ENCODE measurements at regions of chr7 and their contacts with region 1.

Region 1: DNA sequence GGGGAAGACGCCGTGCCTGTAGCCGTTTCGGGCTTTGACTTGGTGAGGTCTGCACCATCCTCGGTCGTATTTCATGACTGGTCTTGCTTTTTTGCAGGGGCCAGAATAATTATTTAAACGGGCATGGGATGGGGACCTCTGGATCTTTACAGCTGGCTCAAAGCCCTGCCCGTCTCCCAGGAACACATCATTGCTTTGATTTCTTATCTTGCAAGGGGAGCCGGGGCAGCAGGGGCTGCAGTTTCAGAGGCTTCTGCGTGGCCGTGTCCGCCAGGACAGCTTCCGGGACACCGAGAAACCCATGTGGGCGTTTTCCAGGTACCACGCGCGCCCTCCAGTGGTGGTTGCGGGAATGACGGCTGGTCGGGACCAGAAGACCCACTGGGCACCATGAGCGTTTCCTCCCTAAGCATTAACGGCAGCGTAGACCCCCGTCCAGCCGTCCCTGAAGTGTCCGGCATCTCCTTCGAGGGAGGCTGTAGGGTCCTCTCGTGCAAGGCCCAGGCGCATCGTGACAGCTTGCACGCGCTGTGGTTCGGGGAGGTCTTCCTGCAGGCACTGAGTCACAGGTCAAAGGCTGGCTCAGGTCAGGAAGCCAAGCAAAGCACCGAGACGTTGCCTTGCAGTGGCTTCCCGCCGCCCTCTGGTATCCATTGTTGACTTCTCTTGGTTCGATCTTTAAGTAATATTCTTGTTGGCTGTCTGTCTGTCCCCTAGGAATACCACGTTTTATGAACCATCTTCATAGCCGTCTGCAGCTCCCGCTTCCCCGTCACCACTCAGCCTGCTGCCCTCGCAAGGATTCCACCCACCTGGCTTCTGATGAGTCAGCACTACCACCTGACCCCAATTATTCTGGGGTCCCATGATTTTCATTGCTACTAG is 16.2 kb upstream of the ZFAND2A start:
- DNase-seq: peak; percentile 87
- ATAC-seq: peak; percentile 73
- H3K4me3 Mint-ChIP-seq: peak overlapping the region; percentile 22
- H3K27ac Mint-ChIP-seq: peak overlapping the region; percentile 86
- H3K4me1 Mint-ChIP-seq: peaks cover 20% of the 10 kb centered on the region
- H3K27me3 Mint-ChIP-seq: peaks cover 11% of the 10 kb centered on the region

Region 2: DNA sequence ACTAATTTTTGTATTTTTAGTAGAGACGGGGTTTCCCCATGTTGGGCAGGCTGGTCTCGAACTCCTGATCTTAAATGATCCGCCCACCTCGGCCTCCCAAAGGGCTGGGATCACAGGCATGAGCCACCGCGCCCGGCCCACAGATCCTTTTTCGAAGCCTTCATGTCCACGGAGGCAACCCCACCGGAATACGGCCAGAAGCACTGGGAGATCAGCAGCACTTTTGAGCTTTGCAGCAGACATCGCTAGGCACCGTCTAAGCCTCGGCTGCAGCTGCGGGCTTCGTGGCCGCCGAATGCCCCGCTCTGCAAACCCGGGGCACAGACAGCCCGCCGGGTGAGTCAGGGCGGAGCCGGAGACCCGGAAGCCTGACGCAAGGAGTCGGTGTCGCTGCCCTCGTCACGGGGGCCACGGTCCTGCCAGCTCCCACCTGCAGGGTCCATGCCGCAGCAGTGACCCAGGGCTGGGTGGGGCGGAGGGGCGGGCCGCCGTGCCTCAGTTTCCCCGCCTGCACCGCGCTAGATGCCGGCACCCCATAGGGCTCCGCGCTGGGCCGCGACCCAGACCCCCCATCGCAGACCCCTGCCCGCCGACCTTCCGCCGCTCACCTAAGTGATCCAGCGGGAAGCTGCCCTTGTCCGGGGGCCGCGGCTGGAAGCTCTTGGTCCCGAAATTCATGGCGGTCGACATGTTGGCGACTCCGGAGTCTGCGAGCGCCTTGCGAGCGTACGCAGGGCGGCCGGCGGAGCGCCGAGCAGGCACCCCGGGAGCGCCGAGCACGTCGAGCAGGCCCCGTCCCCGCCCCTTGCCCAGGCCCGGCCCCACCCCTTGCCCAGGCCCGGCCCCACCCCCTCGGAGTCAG is 201.2 kb before region 1 on chr7 and contains the start of gene COX19:
- CTCF ChIA-PET with region 1: interaction called, 11 read pairs
- POLR2A ChIA-PET with region 1: interaction called, 4 read pairs
- DNase-seq: peak; percentile 92
- ATAC-seq: peak; percentile 91
- H3K4me3 Mint-ChIP-seq: peak within 1 kb of the TSS; percentile 93
- H3K27ac Mint-ChIP-seq: peak within 1 kb of the TSS; percentile 92
- H3K4me1 Mint-ChIP-seq: peaks cover 28% of the 10 kb centered on the region
- H3K27me3 Mint-ChIP-seq: no peaks in the 10 kb centered on the region
- total RNA-seq, gene COX19: 16.8 to 18.2 TPM

Region 3: DNA sequence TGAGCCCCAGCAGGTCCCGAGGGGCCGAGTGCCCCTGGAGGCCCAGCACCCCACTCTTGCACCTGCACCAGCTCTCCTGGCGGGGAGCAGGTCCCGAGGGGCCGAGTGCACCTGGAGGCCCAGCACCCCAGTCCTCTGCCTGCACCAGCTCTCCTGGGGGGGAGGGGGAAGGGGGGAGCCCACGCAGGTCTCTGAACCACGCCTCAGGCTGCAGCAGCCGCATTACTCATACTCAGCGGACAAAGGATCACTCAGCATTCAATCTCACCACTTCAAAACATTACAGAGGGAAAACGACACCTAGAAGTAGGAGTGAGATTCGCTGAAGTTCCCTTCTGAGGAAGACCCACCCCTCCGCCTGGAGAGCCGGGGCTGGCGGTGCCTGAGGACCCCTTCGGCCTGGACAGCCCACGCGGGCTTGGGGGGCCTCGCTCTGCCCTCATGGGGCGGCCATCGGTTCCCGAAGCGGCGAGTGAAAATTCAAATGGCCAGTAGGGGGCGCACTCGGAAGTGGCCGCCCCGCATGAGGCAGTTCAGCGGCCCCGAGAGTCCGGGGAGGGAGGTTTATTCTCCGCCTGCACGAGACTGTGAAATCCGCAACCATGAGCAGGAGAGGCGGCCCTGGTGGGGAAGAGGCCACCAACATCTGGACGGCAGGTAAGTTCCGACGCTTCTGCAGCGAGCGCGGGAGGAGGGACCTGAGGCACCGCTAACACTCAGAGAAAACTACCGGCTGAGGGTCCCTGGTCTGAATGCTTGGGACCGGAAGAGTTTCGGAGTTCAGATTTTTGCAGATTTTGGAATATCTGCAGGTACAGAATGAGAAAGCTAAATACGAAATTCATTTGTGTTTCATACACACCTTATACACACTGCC is 89.4 kb before region 1 on chr7:
- CTCF ChIA-PET with region 1: interaction called, 20 read pairs
- POLR2A ChIA-PET with region 1: no interaction called
- DNase-seq: peak; percentile 82
- ATAC-seq: peak; percentile 93
- H3K4me3 Mint-ChIP-seq: peak overlapping the region; percentile 65
- H3K27ac Mint-ChIP-seq: no peak overlapping the region
- H3K4me1 Mint-ChIP-seq: peaks cover 12% of the 10 kb centered on the region
- H3K27me3 Mint-ChIP-seq: no peaks in the 10 kb centered on the region

Region 4: DNA sequence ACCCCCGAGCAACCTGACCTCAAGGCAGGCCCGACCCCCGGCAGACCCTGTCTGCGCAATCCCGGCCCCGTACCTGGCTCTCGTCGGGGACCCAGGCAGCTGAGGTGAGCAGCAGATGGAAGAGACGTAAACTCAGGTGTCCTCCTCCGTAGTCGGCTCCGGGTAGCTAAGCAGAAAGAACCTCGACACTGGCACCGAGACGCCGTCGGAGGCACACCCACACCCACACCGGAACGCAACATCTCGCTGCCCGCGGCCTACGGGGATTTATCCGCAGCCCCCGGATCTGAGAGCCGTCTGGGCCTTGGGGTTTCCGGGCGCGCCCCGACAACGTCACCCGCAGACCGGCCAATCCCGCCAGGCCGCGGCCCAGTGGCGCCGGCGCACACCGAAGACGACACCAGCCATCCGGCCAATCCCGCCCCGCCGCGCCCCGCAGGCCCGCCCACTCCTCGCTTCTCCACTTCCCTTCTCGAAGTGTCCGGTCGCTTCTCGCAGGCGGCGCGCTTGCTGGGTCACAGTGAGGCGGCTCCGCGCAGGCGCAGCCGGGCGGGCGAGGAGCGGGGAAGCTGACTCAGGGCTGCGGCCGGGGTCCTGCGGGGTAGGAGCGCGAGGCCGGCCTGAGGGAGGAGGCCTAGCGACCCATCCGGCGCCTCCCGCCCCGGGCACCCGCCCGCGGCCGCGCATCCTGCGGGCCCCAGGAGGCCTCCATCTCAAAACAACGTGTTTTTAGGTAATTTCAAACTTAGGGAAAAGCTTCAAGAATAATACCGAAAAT is 16.1 kb before region 1 on chr7 and contains the start of gene ZFAND2A:
- CTCF ChIA-PET with region 1: interaction called, 19 read pairs
- POLR2A ChIA-PET with region 1: interaction called, 6 read pairs
- DNase-seq: peak; percentile 99
- ATAC-seq: peak; percentile 97
- H3K4me3 Mint-ChIP-seq: peak within 1 kb of the TSS; percentile 85
- H3K27ac Mint-ChIP-seq: peak within 1 kb of the TSS; percentile 93
- H3K4me1 Mint-ChIP-seq: peaks cover 28% of the 10 kb centered on the region
- H3K27me3 Mint-ChIP-seq: no peaks in the 10 kb centered on the region
- total RNA-seq, gene ZFAND2A: 25.6 to 26.0 TPM

Region 5: DNA sequence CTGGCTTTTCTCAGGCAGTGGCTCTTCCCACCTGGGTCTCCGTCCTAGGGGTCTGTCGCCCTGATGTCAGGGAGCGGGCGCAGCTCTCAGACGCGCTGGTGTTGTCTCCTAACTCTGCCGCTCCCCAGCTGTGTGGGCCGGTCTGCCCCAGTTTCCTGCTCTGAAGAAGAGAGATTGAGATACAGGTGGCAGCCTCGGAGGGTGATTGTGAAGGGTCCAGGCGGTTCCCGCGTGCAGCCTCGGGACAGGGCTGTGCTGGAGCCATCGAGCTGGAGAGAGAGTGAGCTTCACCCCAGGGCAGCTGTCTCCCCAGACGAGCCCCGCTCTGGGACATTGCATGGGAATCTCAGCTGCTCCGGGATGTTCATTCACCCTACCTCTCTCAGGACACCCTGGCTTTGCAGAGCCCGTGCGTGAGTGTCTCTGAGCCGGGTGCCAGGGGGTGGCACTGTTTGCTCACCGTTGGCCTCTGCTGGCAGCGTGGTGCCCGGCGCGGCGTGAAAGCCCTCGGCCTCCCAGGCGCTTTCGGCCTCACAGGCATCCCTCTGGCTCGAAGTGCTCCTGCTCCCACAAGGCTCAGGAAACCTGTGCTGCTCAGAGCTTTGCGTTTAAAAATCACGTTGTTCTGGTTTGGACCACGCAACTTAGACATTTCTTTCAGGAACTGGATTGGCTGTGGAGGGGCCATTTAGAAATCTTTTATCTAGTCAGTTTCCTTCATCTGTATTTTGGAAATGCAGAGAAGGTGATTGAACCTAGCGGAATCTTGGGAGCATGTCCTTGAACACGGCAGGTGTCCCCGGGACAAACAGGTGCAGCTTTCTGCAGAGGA is 17.6 kb after region 1 on chr7:
- CTCF ChIA-PET with region 1: interaction called, 68 read pairs
- POLR2A ChIA-PET with region 1: no interaction called
- DNase-seq: peak; percentile 59
- ATAC-seq: peak; percentile 77
- H3K4me3 Mint-ChIP-seq: no peak overlapping the region
- H3K27ac Mint-ChIP-seq: no peak overlapping the region
- H3K4me1 Mint-ChIP-seq: peaks cover 36% of the 10 kb centered on the region
- H3K27me3 Mint-ChIP-seq: peaks cover 9% of the 10 kb centered on the region

Region 6: GRCh38 chr7:1290026-1290678 is 113.9 kb after region 1 on chr7:
- CTCF ChIA-PET with region 1: no interaction called
- POLR2A ChIA-PET with region 1: no interaction called
- DNase-seq: peak; percentile 28
- ATAC-seq: peak; percentile 45
- H3K4me3 Mint-ChIP-seq: peak overlapping the region; percentile 43
- H3K27ac Mint-ChIP-seq: no peak overlapping the region
- H3K4me1 Mint-ChIP-seq: peaks cover 13% of the 10 kb centered on the region
- H3K27me3 Mint-ChIP-seq: peaks cover 16% of the 10 kb centered on the region